Ovary (tissue), 10 donors: ENCODE measurements at regions of chr9 and their contacts with region 1.

Region 1: GRCh38 chr9:112097712-112098688 is 77.1 kb downstream of the SUSD1 start:
- DNase-seq: peak; percentile 39 to 65 (median 55)
- H3K4me3 ChIP-seq: no peak overlapping the region
- H3K27ac ChIP-seq: no peak overlapping the region
- H3K4me1 ChIP-seq: no peaks in the 10 kb centered on the region
- H3K27me3 ChIP-seq: no peaks in the 10 kb centered on the region
- CTCF ChIP-seq: peak; percentile 49 to 77 (median 64)
- EP300 ChIP-seq: no peak
- POLR2A ChIP-seq: no peak

Region 2: DNA sequence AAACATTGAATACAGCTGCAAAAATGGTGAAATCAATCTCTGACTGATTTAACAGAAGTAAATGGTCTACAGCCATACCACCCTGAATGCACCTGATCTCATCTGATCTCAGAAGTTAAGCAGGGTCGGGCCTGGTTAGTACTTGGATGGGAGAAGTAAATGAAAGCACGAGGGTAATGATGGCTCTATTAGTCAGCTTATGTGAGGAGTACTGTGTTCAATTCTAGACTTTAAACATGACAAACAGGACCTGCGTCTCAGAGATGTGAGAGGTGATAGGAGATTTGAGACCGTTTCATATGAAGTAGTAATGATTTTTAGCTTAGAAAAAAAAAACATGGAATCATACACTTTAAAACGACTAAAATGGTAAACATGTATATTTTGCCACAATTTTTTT is 154.2 kb after region 1 on chr9:
- intact Hi-C with region 1: no loop called
- DNase-seq: no peak
- H3K4me3 ChIP-seq: no peak overlapping the region
- H3K27ac ChIP-seq: no peak overlapping the region
- H3K4me1 ChIP-seq: no peaks in the 10 kb centered on the region
- H3K27me3 ChIP-seq: no peaks in the 10 kb centered on the region
- CTCF ChIP-seq: no peak
- EP300 ChIP-seq: no peak
- POLR2A ChIP-seq: no peak

Region 3: DNA sequence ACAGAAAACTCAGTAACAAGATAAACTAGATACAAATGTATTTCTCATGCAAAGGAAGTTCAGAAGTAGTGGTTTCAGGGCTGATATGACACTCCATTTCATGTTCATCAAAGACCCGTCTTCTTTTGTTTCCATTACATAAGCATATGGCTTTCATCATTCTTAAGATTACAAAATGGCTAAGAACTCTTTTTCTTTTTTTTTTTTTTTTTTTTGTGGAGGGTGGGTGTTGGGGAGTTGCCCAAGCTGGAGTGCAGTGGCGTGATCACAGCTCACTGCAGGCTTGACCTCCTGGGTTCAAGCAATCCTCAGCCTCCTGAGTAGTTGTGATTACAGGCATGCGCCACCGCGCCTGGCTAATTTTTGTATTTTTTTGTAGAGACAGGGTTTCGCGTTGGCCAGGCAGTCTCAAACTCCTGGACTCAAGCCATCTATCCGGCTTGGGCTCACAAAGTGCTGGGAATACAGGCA is 257.5 kb after region 1 on chr9:
- intact Hi-C with region 1: loop called in 3 of 4 experiments (anchors 5 to 10 kb)
- DNase-seq: peak; percentile 46 to 60 (median 55)
- H3K4me3 ChIP-seq: no peak overlapping the region
- H3K27ac ChIP-seq: peak overlapping the region in 1 of 2 donors; percentile 16
- H3K4me1 ChIP-seq: no peaks in the 10 kb centered on the region
- H3K27me3 ChIP-seq: no peaks in the 10 kb centered on the region
- CTCF ChIP-seq: no peak
- EP300 ChIP-seq: no peak
- POLR2A ChIP-seq: no peak

Region 4: DNA sequence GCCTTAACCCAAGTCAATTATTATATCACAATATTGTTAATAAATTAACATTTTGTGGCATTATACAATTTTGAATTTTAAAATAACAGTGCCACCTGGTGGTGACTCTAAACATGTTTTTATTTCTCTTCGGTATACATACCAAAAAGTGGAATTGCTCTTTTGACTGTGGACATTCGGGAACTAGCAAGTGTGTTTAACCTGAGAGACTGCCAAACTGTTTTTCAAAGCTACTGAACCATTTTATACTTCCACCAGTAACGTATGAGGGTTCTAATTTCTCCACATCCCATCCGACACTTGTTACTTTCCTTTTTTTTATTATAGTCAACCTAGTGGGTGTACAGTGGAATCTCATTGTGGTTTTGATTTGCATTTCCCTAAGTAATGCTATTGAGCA is 263.6 kb after region 1 on chr9:
- intact Hi-C with region 1: loop called in 3 of 4 experiments (anchors 5 to 10 kb)
- DNase-seq: no peak
- H3K4me3 ChIP-seq: no peak overlapping the region
- H3K27ac ChIP-seq: no peak overlapping the region
- H3K4me1 ChIP-seq: no peaks in the 10 kb centered on the region
- H3K27me3 ChIP-seq: no peaks in the 10 kb centered on the region
- CTCF ChIP-seq: peak; percentile 18 to 66 (median 65)
- EP300 ChIP-seq: no peak
- POLR2A ChIP-seq: no peak

Region 5: GRCh38 chr9:112717661-112718341 is 619.8 kb after region 1 on chr9 and contains the start of gene INIP:
- intact Hi-C with region 1: loop called in 1 of 4 experiments (anchors 10 kb)
- DNase-seq: peak; percentile 92 to 96 (median 94)
- H3K4me3 ChIP-seq: peak within 1 kb of the TSS; percentile 62
- H3K27ac ChIP-seq: peak within 1 kb of the TSS; percentile 79
- H3K4me1 ChIP-seq: no peaks in the 10 kb centered on the region
- H3K27me3 ChIP-seq: no peaks in the 10 kb centered on the region
- CTCF ChIP-seq: no peak
- EP300 ChIP-seq: no peak
- POLR2A ChIP-seq: peak; percentile 62
- total RNA-seq, gene INIP: 7.4 to 26.3 (median 21.5) TPM

Region 6: GRCh38 chr9:112819635-112820496 is 721.9 kb after region 1 on chr9:
- intact Hi-C with region 1: loop called in 1 of 4 experiments (anchors 10 kb)
- DNase-seq: peak; percentile 27 to 50 (median 37)
- H3K4me3 ChIP-seq: no peak overlapping the region
- H3K27ac ChIP-seq: no peak overlapping the region
- H3K4me1 ChIP-seq: peaks cover 1% of the 10 kb centered on the region
- H3K27me3 ChIP-seq: no peaks in the 10 kb centered on the region
- CTCF ChIP-seq: peak; percentile 11 to 57 (median 37)
- EP300 ChIP-seq: no peak
- POLR2A ChIP-seq: no peak